ENCODE measurements at regions of chr7 and their contacts with region 1.

Region 1: DNA sequence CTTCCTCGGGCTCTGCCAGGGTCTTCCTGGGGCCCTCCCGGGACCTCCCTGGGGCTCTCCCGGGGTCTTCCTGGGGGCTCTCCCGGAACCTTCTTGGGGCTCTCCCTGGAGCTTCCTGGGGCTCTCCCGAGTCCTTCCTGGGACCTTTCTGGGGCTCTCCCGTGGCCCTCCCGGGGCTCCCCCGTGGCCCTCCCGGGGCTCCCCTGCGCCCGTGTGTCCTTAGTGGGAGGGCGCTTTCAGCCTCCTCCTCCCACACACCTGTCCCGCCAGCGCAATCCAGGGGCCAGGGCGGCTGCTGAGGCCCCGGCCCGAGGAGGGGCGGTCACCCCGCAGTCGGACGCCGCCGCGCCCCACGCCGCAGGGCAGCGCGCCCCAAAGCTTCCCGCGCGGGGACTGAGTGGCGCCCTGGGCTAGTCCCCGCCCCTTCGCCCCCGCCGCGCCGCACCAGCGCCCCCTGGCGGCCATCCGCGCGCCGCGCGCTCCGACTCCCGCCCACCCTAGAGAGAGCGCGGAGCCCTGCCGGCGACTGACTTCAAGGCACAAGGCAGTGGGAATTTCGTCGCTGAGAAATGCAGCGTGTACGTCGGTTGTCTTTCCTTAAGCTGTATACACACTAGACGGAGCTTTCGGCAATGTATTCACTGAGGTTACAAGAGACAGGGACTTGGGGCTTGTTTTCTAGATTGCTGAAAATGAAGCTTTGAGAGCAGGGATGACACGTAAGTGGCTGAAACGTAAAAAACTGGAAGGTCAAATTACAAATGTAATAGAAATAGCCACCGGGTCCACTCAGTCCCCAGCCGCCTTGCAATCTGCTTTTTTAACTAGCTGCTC is 47.1 kb downstream of the INSIG1 start:
- DNase-seq: peak; percentile 48
- H3K4me3 ChIP-seq: peak overlapping the region; percentile 25 to 33
- H3K27ac ChIP-seq: no peak overlapping the region
- H3K4me1 ChIP-seq: no peaks in the 10 kb centered on the region
- H3K27me3 ChIP-seq: peaks cover 5% of the 10 kb centered on the region
- CTCF ChIP-seq: peak; percentile 94 to 97 (median 95)
- POLR2A ChIP-seq: no peak

Region 2: DNA sequence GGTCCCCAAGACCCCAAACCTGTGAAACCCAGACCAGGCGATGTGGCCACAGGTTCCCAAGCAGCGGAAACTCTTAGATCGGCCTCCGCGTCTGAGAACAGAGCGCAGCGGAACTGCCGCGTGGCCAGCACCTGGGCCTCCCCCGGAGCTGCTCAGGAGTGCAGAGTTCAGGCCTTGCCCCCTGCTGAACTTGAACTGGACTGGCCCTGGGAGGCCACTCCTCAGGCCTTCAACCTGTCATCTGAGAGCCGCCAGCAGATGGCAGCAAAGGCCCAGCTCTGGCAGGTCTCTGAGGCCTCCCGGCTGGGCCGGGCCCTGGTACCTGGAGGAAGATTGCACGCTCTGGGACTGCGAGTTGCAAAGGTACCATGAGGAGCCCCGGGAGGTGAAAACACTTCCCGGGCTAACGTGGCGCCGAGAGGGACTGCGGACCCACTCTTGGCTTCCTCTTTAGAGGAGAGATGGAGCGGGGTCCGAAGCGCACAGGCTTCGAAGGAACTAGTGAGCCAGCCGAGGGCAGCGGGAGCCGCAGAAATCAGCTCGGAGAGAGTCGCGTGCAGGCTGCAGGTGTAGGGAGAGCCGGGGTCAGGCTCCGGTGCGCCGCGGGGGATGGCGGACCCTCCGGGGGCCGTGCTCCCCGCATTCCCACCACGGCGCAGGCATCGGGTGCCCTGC is 431.0 kb before region 1 on chr7:
- intact Hi-C with region 1: loop called (anchors 5 kb)
- DNase-seq: peak; percentile 83
- H3K4me3 ChIP-seq: no peak overlapping the region
- H3K27ac ChIP-seq: no peak overlapping the region
- H3K4me1 ChIP-seq: no peaks in the 10 kb centered on the region
- H3K27me3 ChIP-seq: no peaks in the 10 kb centered on the region
- CTCF ChIP-seq: peak; percentile 60 to 84 (median 78)
- POLR2A ChIP-seq: no peak

Region 3: DNA sequence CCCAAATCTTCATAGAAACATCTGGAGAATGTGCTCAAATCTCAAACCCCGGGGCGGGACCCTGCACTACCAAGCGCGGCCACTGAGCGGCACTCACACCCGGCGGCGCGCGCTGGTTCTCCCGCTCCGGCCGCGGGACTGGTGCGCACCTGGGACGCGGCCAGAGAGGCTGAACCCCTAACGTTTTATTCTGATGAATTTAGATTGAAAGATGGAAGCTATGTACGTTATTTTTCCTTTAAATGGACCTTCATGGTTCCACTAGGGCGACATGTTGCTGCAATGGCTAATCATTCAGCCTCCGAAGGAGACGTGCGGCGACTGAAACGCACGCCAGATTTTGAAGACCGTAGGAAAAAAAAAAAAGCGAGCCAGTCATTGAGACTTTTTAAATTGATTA is 154.1 kb before region 1 on chr7:
- intact Hi-C with region 1: loop called (anchors 2 kb)
- DNase-seq: peak; percentile 40
- H3K4me3 ChIP-seq: no peak overlapping the region
- H3K27ac ChIP-seq: no peak overlapping the region
- H3K4me1 ChIP-seq: no peaks in the 10 kb centered on the region
- H3K27me3 ChIP-seq: no peaks in the 10 kb centered on the region
- CTCF ChIP-seq: peak; percentile 87 to 99 (median 91)
- POLR2A ChIP-seq: no peak

Region 4: GRCh38 chr7:155590215-155591018 is 245.6 kb after region 1 on chr7:
- intact Hi-C with region 1: no loop called
- DNase-seq: no peak
- H3K4me3 ChIP-seq: no peak overlapping the region
- H3K27ac ChIP-seq: no peak overlapping the region
- H3K4me1 ChIP-seq: no peaks in the 10 kb centered on the region
- H3K27me3 ChIP-seq: peaks cover 4% of the 10 kb centered on the region
- CTCF ChIP-seq: no peak
- POLR2A ChIP-seq: no peak